ENCODE measurements at regions of chr1 and their contacts with region 1.

Region 1: DNA sequence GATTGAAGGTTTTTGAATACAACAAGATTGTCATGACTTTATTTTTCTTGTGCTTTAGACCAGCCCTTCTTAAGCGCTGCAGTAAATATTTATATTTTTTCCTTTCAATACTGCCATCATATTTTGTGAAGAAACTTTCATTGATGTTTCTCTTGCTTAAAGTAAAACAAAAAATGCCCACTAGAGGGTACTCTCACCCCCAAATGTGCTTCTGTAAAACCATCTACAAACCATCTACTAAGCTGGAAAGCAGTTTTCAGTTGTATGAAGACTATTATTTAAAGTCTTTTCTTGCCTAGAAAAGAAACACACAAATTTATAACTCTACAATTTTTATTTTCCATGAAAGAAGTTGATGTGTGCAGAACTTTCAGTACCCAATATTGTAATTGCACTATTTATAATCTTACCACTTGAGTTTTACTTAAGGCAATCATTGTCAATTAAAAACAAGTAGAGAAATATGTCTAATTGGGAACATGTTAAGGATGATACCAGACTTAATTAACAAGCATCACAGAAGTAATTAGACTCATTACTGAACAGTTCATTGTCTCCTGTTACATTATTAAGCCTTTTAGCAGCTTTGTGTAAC is 10.7 kb downstream of the LEPR start:
- DNase-seq: peak; percentile 79
- H3K4me3 ChIP-seq: peak overlapping the region in 1 of 3 experiments; percentile 26
- H3K27ac ChIP-seq: peak overlapping the region; percentile 97
- H3K4me1 ChIP-seq: peaks cover 33% of the 10 kb centered on the region
- H3K27me3 ChIP-seq: no peaks in the 10 kb centered on the region
- CTCF ChIP-seq: peak; percentile 35 to 36
- POLR2A ChIP-seq: no peak

Region 2: DNA sequence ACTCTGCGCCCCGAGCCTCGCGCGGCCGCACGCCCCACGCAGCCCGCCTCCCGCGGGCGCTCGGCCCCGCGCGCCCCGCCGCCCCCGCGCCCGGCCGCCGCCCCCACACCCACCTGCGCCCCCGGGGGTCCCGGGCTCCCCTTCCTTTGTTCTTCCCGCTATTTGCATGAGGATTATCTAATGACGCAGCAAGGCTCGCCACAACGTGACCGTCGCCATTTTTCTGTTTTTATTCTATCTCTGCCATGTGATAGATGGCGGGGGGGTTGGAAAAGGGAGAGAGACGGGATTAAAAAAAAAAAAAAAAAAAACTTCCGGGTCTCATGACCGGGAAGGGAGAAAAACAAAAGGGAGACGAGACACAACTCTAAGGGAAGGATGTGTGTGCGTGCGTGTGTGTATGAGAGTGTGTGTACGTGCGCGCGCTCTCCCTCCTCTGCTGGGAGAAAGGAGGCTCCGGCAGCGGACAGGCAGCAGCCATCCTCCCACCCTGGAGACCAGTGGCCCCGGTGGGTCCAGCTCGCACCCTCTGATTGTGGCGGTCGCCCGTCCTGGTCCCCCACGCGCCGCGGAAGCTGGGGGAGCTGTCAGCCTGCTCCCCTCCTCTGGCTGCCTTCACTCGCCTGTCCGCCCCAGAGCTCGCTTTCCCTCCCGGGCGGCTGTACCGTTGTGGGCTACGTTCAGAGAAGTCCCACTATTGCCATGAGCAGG is 363.6 kb before region 1 on chr1:
- CTCF ChIA-PET with region 1: no interaction called
- POLR2A ChIA-PET with region 1: no interaction called
- dilution Hi-C with region 1: no loop called
- intact Hi-C with region 1: loop called (anchors 2 kb)
- DNase-seq: peak; percentile 84
- H3K4me3 ChIP-seq: peak overlapping the region; percentile 48 to 88 (median 85)
- H3K27ac ChIP-seq: peak overlapping the region; percentile 82
- H3K4me1 ChIP-seq: peaks cover 14% of the 10 kb centered on the region
- H3K27me3 ChIP-seq: no peaks in the 10 kb centered on the region
- CTCF ChIP-seq: no peak
- POLR2A ChIP-seq: no peak

Region 3: DNA sequence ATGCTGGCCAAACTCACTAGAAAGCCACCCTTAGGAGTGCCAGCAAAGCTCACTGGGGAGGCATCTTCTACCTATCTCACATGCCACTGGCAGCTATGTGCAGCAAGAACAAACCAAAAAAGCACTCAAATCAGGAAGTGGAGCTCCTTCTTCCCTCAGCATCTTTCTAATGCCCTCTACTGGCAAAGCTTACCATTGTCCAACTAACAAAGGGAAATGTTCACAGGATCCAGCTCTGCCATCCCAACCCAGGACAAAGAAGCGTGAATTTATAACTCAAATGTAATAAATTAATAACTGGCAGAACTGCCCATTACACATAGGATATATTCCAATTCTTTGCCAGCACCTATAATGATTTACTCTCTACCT is 28.2 kb after region 1 on chr1:
- CTCF ChIA-PET with region 1: interaction called, 46 read pairs
- POLR2A ChIA-PET with region 1: no interaction called
- dilution Hi-C with region 1: no loop called
- intact Hi-C with region 1: loop called (anchors 2 kb)
- DNase-seq: peak; percentile 50
- H3K4me3 ChIP-seq: no peak overlapping the region
- H3K27ac ChIP-seq: no peak overlapping the region
- H3K4me1 ChIP-seq: no peaks in the 10 kb centered on the region
- H3K27me3 ChIP-seq: no peaks in the 10 kb centered on the region
- CTCF ChIP-seq: peak; percentile 44 to 56
- POLR2A ChIP-seq: no peak

Region 4: GRCh38 chr1:65525266-65526048 is 94.2 kb after region 1 on chr1:
- CTCF ChIA-PET with region 1: no interaction called
- POLR2A ChIA-PET with region 1: no interaction called
- dilution Hi-C with region 1: no loop called
- intact Hi-C with region 1: loop called (anchors 1 kb)
- DNase-seq: no peak
- H3K4me3 ChIP-seq: peak overlapping the region; percentile 34 to 84 (median 38)
- H3K27ac ChIP-seq: no peak overlapping the region
- H3K4me1 ChIP-seq: peaks cover 27% of the 10 kb centered on the region
- H3K27me3 ChIP-seq: no peaks in the 10 kb centered on the region
- CTCF ChIP-seq: no peak
- POLR2A ChIP-seq: no peak

Region 5: DNA sequence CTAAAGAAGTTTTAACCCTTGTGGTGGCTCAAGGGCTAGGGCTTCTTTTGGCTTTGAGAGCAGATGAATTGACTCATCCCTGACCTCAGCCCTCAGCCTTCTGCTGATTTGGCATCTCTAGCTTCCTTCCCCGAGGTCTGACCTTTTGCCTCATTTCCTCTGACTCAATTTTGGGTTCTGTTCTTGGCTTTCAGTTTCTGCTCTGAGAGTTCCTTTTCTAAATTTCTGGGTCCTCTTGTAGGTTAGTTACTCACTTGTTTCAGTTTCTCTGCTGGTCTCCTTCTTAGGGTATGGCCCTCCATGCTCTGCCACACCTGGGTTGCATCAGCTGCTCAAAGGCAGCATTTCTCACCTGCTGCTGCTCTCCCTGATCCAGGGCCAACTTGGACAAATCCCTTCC is 380.9 kb after region 1 on chr1:
- CTCF ChIA-PET with region 1: no interaction called
- POLR2A ChIA-PET with region 1: no interaction called
- dilution Hi-C with region 1: no loop called
- intact Hi-C with region 1: loop called (anchors 2 kb)
- DNase-seq: peak; percentile 75
- H3K4me3 ChIP-seq: no peak overlapping the region
- H3K27ac ChIP-seq: peak overlapping the region; percentile 51
- H3K4me1 ChIP-seq: peaks cover 18% of the 10 kb centered on the region
- H3K27me3 ChIP-seq: no peaks in the 10 kb centered on the region
- CTCF ChIP-seq: no peak
- POLR2A ChIP-seq: no peak

Region 6: DNA sequence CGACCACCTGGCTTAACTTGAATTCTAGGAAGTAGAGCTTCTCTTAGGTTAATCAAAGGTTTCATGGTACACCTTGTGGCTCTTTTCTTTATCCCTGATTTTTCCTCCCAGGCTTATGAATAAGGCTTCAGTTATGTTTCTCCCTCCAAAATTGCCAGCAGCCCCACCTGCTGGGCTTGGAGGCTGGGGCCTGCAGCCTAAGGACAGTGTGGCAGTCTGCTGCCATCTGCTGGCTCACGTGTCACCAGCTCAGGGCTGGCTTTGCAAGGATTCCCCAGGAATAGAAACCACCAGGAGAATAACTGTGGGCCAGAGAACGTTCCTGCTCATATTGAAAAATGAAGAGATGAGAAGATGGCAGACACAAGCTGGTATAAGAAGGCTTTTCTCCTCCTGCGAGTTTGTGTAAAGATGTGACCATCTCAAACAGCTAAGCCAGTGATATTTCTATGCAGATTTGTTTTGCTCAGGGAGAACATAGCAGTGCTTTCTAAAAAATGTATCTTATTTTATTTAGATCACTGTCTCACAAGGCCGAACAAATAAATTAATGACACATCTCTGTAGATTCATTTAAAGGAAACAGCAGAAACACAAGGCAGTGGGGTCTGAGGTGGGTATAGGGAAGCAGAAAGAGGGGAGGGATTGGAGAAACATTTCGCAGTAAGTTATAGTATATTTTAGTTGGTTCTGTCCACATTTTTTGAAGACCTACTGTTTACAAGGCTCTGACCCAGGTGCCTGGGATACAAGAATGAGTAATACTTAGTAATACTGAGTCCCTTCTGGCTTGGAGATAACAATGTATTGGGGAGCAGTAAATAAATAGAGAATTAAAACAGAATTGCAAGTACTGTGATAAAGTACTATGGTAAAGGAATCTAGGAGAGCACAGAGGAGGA is 811.7 kb after region 1 on chr1:
- CTCF ChIA-PET with region 1: no interaction called
- POLR2A ChIA-PET with region 1: no interaction called
- dilution Hi-C with region 1: no loop called
- intact Hi-C with region 1: loop called (anchors 2 kb)
- DNase-seq: peak; percentile 85
- H3K4me3 ChIP-seq: no peak overlapping the region
- H3K27ac ChIP-seq: peak overlapping the region; percentile 64
- H3K4me1 ChIP-seq: peaks cover 26% of the 10 kb centered on the region
- H3K27me3 ChIP-seq: no peaks in the 10 kb centered on the region
- CTCF ChIP-seq: peak; percentile 98 to 100
- POLR2A ChIP-seq: no peak

Region 7: DNA sequence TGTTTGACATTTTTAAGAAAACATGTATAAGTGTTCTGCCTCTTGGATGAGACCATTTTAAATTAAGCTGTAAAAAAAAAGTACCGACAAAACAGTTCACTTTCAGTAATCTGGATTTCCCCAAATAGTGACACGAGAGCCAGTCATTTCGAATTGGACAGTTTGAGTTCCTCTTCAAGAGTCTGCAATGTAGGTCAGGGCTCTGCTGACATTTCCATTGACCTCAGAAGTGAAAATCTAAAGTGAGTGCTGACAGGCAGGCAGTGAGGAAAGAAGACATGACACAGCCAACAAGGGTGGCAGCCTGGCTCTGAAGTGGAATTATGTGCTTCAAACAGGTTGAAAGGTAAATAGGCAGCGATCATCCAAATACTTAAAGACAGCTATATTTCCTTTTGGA is 1735.0 kb after region 1 on chr1 and contains the start of gene IL23R:
- CTCF ChIA-PET with region 1: no interaction called
- POLR2A ChIA-PET with region 1: no interaction called
- dilution Hi-C with region 1: no loop called
- intact Hi-C with region 1: no loop called
- DNase-seq: no peak
- H3K4me3 ChIP-seq: no peak within 1 kb of the TSS
- H3K27ac ChIP-seq: no peak within 1 kb of the TSS
- H3K4me1 ChIP-seq: no peaks in the 10 kb centered on the region
- H3K27me3 ChIP-seq: peaks cover 2 to 5% of the 10 kb centered on the region in 2 experiments
- CTCF ChIP-seq: no peak
- POLR2A ChIP-seq: no peak
- total RNA-seq, gene IL23R: not detected in 2 replicates

Measured in endothelial cell of umbilical vein (primary cell).